CD14-positive monocyte (primary cell): ENCODE measurements at regions of chr21 and their contacts with region 1.

Region 1: GRCh38 chr21:39004634-39005501 is 178.4 kb downstream of the PSMG1 start:
- DNase-seq: peak; percentile 54 to 66 (median 61)
- H3K4me3 ChIP-seq: peak overlapping the region in 1 of 3 experiments; percentile 68
- H3K4me3 Mint-ChIP-seq: peak overlapping the region; percentile 71 to 85
- H3K27ac ChIP-seq: peak overlapping the region; percentile 79 to 85
- H3K27ac Mint-ChIP-seq: peak overlapping the region; percentile 90 to 98 (median 95)
- H3K4me1 ChIP-seq: peaks cover 66 to 71% of the 10 kb centered on the region in 2 donors
- H3K4me1 Mint-ChIP-seq: peaks cover 70% of the 10 kb centered on the region
- H3K27me3 ChIP-seq: no peaks in the 10 kb centered on the region
- H3K27me3 Mint-ChIP-seq: peaks cover 0 to 10% (median 0%) of the 10 kb centered on the region in 3 donors
- CTCF ChIP-seq: no peak

Region 2: DNA sequence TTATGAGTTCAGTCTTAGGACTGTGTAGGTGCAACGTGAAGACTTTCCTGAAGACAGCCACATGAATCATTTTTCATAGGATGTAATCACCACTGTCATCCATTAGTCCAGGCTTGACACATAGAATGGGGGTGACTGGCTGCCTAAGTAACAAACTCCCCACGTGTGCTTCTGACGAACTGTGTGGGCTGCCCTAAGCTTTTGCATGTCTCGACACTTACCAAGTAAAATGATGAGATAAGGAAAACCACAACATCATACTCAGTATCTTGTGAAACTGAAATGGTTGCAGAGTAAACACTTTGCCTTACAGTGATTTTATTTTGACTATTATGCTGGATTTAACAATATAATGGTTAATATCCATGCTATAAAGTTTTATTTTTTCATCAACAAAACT is 526.1 kb before region 1 on chr21:
- intact Hi-C with region 1: loop called in 1 of 2 experiments (anchors 10 kb)
- DNase-seq: peak; percentile 41 to 79 (median 58)
- H3K4me3 ChIP-seq: no peak overlapping the region
- H3K4me3 Mint-ChIP-seq: no peak overlapping the region
- H3K27ac ChIP-seq: no peak overlapping the region
- H3K27ac Mint-ChIP-seq: no peak overlapping the region
- H3K4me1 ChIP-seq: peaks cover 39 to 53% of the 10 kb centered on the region in 2 donors
- H3K4me1 Mint-ChIP-seq: peaks cover 55% of the 10 kb centered on the region
- H3K27me3 ChIP-seq: no peaks in the 10 kb centered on the region
- H3K27me3 Mint-ChIP-seq: peaks cover 0 to 4% (median 0%) of the 10 kb centered on the region in 3 donors
- CTCF ChIP-seq: no peak

Region 3: DNA sequence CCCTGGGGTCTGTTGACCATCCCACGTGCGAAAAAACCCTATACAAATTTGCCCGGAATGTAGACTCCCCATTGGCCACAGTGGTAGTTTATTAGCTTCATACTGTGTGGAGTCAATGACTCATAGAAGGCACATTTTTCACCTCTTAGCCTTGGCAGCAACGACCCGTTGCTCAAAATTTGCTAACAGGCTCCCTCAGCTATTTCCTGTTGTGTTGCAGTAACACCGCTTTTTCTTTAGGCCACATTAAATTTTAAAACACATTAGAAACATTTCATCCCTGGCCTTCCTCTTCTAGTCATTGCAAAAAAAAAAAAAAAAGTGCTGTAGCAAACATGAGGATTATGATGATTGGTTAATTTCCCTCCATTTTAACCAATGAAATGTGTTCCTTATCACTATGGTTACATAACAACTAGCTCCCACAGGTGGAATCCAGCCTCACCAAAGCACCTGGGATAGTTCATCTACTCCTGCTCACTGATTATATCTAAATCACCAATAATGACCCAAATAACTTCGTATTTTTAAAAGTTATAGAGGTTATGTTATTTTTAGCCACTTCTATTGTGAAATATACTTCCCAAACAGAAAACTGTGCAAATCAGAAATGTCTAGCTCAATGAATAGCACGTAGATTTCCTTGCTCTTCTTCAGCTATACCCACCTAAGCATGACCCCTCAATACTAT is 249.0 kb before region 1 on chr21:
- intact Hi-C with region 1: loop called in 1 of 2 experiments (anchors 10 kb)
- DNase-seq: peak; percentile 87 to 95 (median 92)
- H3K4me3 ChIP-seq: peak overlapping the region in 1 of 3 experiments; percentile 12
- H3K4me3 Mint-ChIP-seq: peak overlapping the region; percentile 16 to 53
- H3K27ac ChIP-seq: peak overlapping the region; percentile 75 to 94
- H3K27ac Mint-ChIP-seq: peak overlapping the region; percentile 90 to 97 (median 95)
- H3K4me1 ChIP-seq: peaks cover 77 to 80% of the 10 kb centered on the region in 2 donors
- H3K4me1 Mint-ChIP-seq: peaks cover 86% of the 10 kb centered on the region
- H3K27me3 ChIP-seq: no peaks in the 10 kb centered on the region
- H3K27me3 Mint-ChIP-seq: peaks cover 0 to 4% (median 0%) of the 10 kb centered on the region in 3 donors
- CTCF ChIP-seq: no peak

Region 4: DNA sequence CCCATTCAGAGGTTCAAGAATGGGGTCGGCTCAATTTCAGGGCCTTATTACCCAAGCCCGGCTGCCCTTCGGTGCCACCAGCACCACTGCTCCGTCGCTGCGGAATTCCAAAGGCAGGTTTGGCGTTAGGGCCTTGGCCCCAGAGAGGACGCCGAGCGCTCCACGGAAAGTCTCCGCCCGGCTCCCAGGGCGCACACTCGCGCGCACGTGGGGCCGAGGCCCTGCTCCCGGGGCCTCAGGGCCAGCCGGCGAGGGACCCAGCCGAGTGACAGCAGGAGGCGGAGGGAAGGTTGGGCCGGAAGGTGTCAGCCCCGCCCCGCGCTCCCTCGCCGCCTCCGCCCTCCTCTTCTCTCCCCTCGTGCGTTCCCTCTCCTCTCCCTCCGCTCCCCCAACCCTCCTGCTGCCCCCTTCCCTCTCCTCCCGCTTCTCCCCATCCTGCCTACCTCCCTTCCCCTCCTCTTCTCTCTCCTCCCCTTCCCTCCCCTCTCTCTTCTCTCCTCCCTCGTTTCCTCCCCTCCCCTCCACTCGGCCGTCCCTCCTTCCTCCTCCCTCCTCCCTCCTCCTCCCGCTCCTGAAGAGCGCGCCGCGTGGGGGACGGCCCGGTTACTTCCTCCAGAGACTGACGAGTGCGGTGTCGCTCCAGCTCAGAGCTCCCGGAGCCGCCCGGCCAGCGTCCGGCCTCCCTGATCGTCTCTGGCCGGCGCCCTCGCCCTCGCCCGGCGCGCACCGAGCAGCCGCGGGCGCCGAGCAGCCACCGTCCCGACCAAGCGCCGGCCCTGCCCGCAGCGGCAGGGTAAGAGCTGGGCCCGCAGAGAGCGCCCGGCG is 199.3 kb before region 1 on chr21 and contains the start of gene ETS2:
- intact Hi-C with region 1: loop called in 1 of 2 experiments (anchors 5 kb)
- DNase-seq: peak; percentile 88 to 95 (median 93)
- H3K4me3 ChIP-seq: peak within 1 kb of the TSS; percentile 65 to 95 (median 85)
- H3K4me3 Mint-ChIP-seq: peak within 1 kb of the TSS; percentile 89 to 95
- H3K27ac ChIP-seq: peak within 1 kb of the TSS; percentile 89 to 90
- H3K27ac Mint-ChIP-seq: peak within 1 kb of the TSS; percentile 86 to 98 (median 95)
- H3K4me1 ChIP-seq: peaks cover 48 to 49% of the 10 kb centered on the region in 2 donors
- H3K4me1 Mint-ChIP-seq: peaks cover 39% of the 10 kb centered on the region
- H3K27me3 ChIP-seq: no peaks in the 10 kb centered on the region
- H3K27me3 Mint-ChIP-seq: peaks cover 1 to 2% (median 2%) of the 10 kb centered on the region in 3 donors
- CTCF ChIP-seq: peak; percentile 7
- polyA plus RNA-seq, gene ETS2: 54.2 to 150 (median 59.5) TPM

Region 5: GRCh38 chr21:38831526-38832467 is 173.1 kb before region 1 on chr21:
- intact Hi-C with region 1: loop called (anchors 5 to 10 kb)
- DNase-seq: peak; percentile 99 to 100 (median 99)
- H3K4me3 ChIP-seq: peak overlapping the region in 1 of 3 experiments; percentile 58
- H3K4me3 Mint-ChIP-seq: peak overlapping the region; percentile 39 to 82
- H3K27ac ChIP-seq: peak overlapping the region; percentile 89 to 95
- H3K27ac Mint-ChIP-seq: peak overlapping the region; percentile 94 to 99 (median 98)
- H3K4me1 ChIP-seq: peaks cover 26 to 27% of the 10 kb centered on the region in 2 donors
- H3K4me1 Mint-ChIP-seq: peaks cover 31% of the 10 kb centered on the region
- H3K27me3 ChIP-seq: no peaks in the 10 kb centered on the region
- H3K27me3 Mint-ChIP-seq: no peaks in the 10 kb centered on the region
- CTCF ChIP-seq: no peak

Region 6: DNA sequence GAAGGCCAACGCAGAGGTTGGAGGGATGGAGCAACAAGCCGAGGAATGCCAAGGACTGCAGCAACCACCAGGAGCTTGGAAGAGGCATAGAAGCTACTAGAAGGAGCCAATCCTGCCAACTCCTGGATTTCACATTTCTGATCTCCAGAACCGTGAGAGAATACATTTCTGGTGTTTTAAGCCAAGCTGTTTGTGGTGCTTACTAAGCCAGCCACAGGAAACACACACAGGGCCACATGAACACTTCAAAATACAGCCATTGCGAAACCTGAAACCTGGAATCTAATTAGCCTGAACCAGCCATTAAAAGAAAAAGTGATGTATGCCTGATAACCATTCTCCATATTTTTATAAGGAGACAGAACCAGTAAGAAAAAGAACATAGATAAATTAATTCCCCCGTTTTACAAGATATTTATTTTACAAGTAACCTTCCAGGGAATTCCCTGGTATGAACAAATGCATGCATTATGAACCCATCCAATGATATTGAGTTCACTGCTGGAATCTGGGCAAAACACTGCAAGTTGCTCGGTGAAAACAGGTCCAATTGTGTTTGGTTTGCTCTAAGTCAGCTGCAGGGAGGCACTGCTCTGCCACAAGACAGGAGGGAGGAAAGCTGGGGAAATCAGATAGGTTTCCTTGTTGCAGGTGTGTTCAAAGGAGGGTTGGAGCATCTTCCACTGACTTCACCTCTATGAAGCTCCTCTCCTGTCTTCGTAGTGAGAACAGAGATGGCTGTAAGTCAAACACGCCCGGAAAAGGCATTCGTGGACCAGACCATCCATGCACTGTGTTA is 129.0 kb before region 1 on chr21:
- intact Hi-C with region 1: no loop called
- DNase-seq: peak; percentile 6 to 52 (median 26)
- H3K4me3 ChIP-seq: no peak overlapping the region
- H3K4me3 Mint-ChIP-seq: no peak overlapping the region
- H3K27ac ChIP-seq: peak overlapping the region; percentile 4 to 41
- H3K27ac Mint-ChIP-seq: peak overlapping the region in 3 of 7 donors; percentile 14 to 31 (median 18)
- H3K4me1 ChIP-seq: peaks cover 30 to 40% of the 10 kb centered on the region in 2 donors
- H3K4me1 Mint-ChIP-seq: peaks cover 41% of the 10 kb centered on the region
- H3K27me3 ChIP-seq: no peaks in the 10 kb centered on the region
- H3K27me3 Mint-ChIP-seq: no peaks in the 10 kb centered on the region
- CTCF ChIP-seq: no peak

Region 7: DNA sequence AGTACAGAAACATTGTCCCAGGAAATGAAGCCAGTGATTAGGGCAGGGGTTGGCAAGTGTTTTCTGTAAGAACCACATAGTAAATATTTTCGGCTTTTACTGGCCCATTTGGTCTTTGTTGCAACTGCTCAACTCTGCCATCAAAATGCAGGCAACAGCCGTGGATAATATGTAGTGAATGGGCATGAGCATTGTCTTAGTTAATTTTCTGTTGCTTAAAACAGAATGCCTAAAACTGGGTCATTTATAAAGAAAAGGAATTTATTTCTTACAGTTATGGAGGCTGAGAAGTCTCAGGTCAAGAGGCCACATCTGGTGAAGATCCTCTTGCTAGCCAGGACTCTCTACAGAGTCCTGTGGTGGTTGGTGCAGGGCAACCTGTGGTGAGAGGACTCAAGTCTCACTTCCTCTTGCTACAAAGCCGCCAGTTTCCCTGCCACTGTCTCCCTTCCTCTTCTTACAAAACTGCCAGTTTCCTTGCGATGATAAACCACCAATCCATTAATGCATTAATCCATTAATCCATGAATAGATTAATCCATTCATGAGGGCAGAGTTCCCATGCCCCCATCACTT is 12.0 kb after region 1 on chr21:
- intact Hi-C with region 1: loop called in 1 of 2 experiments (anchors 2 kb)
- DNase-seq: peak; percentile 81 to 93 (median 90)
- H3K4me3 ChIP-seq: peak overlapping the region in 1 of 3 experiments; percentile 22
- H3K4me3 Mint-ChIP-seq: peak overlapping the region in 1 of 2 donors; percentile 42
- H3K27ac ChIP-seq: peak overlapping the region; percentile 39 to 50
- H3K27ac Mint-ChIP-seq: peak overlapping the region; percentile 63 to 89 (median 84)
- H3K4me1 ChIP-seq: peaks cover 67 to 83% of the 10 kb centered on the region in 2 donors
- H3K4me1 Mint-ChIP-seq: peaks cover 50% of the 10 kb centered on the region
- H3K27me3 ChIP-seq: no peaks in the 10 kb centered on the region
- H3K27me3 Mint-ChIP-seq: peaks cover 0 to 3% (median 3%) of the 10 kb centered on the region in 3 donors
- CTCF ChIP-seq: no peak

Region 8: GRCh38 chr21:39094847-39095579 is 90.1 kb after region 1 on chr21:
- intact Hi-C with region 1: loop called in 1 of 2 experiments (anchors 5 kb)
- DNase-seq: peak; percentile 46 to 74 (median 68)
- H3K4me3 ChIP-seq: peak overlapping the region in 1 of 3 experiments; percentile 29
- H3K4me3 Mint-ChIP-seq: peak overlapping the region in 1 of 2 donors; percentile 76
- H3K27ac ChIP-seq: peak overlapping the region; percentile 61 to 86
- H3K27ac Mint-ChIP-seq: peak overlapping the region; percentile 96 to 100 (median 99)
- H3K4me1 ChIP-seq: peaks cover 77 to 81% of the 10 kb centered on the region in 2 donors
- H3K4me1 Mint-ChIP-seq: peaks cover 81% of the 10 kb centered on the region
- H3K27me3 ChIP-seq: no peaks in the 10 kb centered on the region
- H3K27me3 Mint-ChIP-seq: peaks cover 0 to 2% (median 0%) of the 10 kb centered on the region in 3 donors
- CTCF ChIP-seq: no peak